Activated naive CD4-positive, alpha-beta T cell treated with anti-CD3 and anti-CD28 coated beads for 36 hours (primary cell): ENCODE measurements at regions of chr6 and their contacts with region 1.

Region 1: DNA sequence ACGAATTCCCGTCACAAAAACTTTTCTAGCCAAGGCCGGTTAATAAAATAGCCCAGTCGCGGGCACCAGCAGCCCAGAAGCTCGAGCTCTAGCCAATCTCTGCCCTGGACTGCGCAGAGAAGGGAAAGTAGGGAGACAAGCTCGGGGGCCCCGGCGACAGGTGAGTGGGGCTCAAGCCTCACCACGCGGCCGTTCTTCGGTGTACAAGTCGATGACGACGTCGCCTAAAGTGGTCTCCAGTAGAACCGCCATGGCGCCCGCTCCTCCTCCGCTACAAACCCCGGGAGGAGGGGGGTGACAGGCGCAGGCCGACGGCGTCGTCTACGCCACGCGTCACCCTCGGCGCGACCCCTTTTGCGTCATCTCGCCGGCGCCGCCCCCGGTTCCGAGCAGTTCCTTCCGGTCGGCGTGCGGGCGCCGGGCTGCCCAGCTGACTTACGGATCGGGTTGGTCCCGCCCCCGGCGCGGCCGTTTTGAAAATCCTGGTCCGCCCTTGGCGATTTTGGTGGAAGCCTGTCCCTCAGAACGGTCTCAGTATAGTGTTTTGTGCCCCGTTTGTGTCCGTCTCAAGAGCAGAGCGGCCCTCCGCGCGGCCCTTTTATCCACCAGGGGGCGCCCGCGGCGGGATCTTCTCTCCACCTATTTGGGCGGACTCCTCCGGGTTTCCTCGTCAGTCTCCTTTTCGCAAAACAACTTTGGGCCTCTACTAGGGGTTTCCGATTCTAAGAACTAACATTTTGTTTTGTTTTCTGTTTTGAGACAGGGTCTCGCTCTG is at the start of gene PPIL4:
- DNase-seq: peak; percentile 97
- H3K4me3 Mint-ChIP-seq: peak within 1 kb of the TSS; percentile 96
- H3K27ac Mint-ChIP-seq: peak within 1 kb of the TSS; percentile 95
- H3K4me1 Mint-ChIP-seq: peaks cover 37% of the 10 kb centered on the region
- H3K27me3 Mint-ChIP-seq: no peaks in the 10 kb centered on the region
- total RNA-seq, gene PPIL4: 25.8 to 26.2 TPM

Region 2: GRCh38 chr6:149493761-149494320 is 52.1 kb before region 1 on chr6:
- CTCF ChIA-PET with region 1: no interaction called
- intact Hi-C with region 1: loop called (anchors 2 kb)
- DNase-seq: no peak
- H3K4me3 Mint-ChIP-seq: no peak overlapping the region
- H3K27ac Mint-ChIP-seq: peak overlapping the region; percentile 91
- H3K4me1 Mint-ChIP-seq: peaks cover 85% of the 10 kb centered on the region
- H3K27me3 Mint-ChIP-seq: no peaks in the 10 kb centered on the region

Region 3: DNA sequence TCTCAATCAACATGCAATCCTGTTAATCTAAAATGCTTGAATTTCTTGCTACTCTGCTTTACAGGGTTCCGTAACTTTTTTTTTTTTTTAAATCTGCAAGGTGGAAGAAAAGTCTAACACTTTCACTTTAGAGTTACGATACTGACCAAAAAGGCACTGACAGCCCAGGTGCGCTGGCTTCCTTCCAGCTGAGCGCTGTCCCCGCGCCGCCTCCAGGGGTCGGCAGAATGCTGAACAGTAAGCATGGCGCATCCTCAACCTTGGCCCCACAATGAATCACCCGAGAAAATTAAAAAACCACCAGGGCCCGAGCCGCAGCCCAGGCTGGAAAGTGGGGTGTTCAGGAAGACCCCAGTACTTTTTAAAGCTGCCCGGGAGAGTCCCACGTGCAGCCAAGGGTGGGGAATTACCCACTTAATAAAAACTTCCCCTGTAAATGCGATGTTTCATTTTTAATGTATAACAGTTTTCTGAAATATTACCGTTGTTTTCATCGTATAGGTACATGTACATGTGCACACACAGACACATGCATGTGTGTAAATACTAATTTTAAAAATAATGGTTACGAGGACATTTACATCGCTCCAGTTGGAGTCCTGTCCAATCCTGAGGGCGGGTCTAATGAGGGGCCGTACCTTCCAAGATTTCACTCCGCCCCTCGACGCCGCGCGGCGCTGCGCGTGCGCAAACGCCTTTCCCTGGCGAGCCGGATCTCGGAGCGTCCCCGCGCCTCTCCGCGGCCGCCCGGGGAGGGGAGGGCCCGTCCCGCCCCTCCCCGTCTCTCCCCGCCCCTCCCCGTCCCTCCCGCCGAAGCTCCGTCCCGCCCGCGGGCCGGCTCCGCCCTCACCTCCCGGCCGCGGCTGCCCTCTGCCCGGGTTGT is 19.8 kb after region 1 on chr6 and contains the start of gene GINM1:
- CTCF ChIA-PET with region 1: interaction called, 18 read pairs
- intact Hi-C with region 1: loop called (anchors 1 kb)
- DNase-seq: peak; percentile 97
- H3K4me3 Mint-ChIP-seq: peak within 1 kb of the TSS; percentile 92
- H3K27ac Mint-ChIP-seq: peak within 1 kb of the TSS; percentile 89
- H3K4me1 Mint-ChIP-seq: peaks cover 26% of the 10 kb centered on the region
- H3K27me3 Mint-ChIP-seq: no peaks in the 10 kb centered on the region
- total RNA-seq, gene GINM1: 17.6 to 18.4 TPM

Region 4: GRCh38 chr6:149717588-149718458 is 171.9 kb after region 1 on chr6 and contains the start of gene LATS1:
- CTCF ChIA-PET with region 1: interaction called, 5 read pairs
- intact Hi-C with region 1: loop called (anchors 1 kb)
- DNase-seq: peak; percentile 95
- H3K4me3 Mint-ChIP-seq: peak within 1 kb of the TSS; percentile 84
- H3K27ac Mint-ChIP-seq: peak within 1 kb of the TSS; percentile 94
- H3K4me1 Mint-ChIP-seq: peaks cover 25% of the 10 kb centered on the region
- H3K27me3 Mint-ChIP-seq: no peaks in the 10 kb centered on the region
- total RNA-seq, gene LATS1: 18.1 to 19.6 TPM

Region 5: GRCh38 chr6:149834513-149835481 is 288.9 kb after region 1 on chr6:
- CTCF ChIA-PET with region 1: no interaction called
- intact Hi-C with region 1: loop called (anchors 5 kb)
- DNase-seq: peak; percentile 87
- H3K4me3 Mint-ChIP-seq: no peak overlapping the region
- H3K27ac Mint-ChIP-seq: no peak overlapping the region
- H3K4me1 Mint-ChIP-seq: peaks cover 2% of the 10 kb centered on the region
- H3K27me3 Mint-ChIP-seq: no peaks in the 10 kb centered on the region

Region 6: DNA sequence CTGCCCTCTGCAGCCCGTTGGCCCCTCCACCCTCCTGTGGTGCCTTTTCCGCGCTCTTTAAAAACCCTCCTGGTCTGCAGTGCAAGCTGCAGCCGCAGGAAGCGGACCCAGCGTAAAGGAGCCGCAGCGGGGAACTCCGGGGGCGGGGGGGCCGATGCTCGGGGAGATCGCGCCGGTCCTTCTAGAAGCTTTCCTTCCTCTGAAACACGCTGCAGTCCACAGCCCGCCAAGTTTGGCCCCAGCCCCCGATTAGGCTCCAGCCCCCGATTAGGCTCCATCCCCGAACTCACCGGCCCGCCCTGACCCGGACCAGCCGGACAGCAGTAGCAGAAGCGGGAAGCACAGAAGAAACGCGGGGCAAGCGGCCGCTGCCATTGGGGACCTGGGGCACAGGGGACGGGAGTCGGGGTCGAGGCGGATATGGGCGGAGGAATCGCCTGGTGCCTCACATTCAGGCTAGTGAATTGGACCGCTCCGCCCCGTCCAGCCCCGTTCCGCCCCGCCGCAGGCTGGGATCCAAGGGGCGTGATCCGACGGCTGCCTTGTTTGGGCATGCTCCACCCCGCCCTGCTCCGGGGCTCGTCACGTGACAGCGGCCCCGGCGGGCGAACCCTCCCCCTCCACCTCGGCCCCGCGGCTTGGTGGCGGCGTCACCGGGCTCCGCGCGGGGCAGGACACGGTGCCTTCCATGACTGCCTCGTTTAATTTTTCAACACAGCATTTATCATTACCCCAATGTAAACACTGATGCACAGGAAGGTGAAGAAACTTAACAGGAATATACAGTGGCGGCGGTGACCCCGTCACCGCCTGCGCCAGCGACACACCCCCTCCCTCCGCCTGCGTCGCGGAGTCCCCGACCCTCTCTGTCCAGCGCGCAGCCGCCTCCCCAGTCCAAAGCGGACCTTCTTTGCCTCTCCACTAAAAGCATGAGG is 459.1 kb after region 1 on chr6:
- CTCF ChIA-PET with region 1: no interaction called
- intact Hi-C with region 1: loop called (anchors 10 kb)
- DNase-seq: peak; percentile 94
- H3K4me3 Mint-ChIP-seq: peak overlapping the region; percentile 86
- H3K27ac Mint-ChIP-seq: no peak overlapping the region
- H3K4me1 Mint-ChIP-seq: peaks cover 51% of the 10 kb centered on the region
- H3K27me3 Mint-ChIP-seq: peaks cover 26% of the 10 kb centered on the region